ENCODE measurements at regions of chr3 and their contacts with region 1.

Region 1: DNA sequence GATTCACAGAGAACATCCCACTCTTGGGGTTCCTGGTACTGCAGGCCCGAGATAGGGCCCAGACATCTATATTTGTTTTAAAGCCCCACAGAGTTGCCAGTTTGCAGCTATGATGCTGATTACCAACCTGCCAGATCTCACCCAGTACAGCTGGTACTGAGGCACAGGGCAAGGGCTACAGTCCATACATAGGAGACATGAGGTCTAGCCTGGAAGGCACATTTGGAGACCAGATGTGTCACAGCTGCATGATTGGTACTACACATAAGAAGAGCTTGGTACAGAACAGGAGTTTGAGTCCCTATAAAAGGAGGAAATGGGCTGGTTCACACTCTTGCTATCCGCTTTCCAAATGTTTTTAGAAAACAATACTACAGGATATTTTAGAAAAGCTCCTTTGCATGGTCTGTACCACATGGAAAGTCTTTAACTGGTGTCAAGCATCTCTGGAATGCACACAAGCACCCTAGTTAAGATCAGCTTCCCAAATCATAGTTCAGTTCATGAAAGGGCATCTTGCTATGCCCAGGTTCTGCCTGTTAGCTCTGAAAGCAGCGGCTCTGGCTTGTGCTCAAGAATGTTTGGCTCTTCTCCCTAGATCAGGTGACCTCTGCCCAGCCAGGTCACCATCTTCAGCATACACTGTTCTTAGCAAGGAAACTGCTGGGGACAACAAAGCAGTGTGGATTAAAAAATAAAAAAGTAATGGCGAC is 20.6 kb downstream of the MTMR14 start:
- DNase-seq: no peak
- H3K4me3 Mint-ChIP-seq: no peak overlapping the region
- H3K27ac Mint-ChIP-seq: no peak overlapping the region
- H3K4me1 Mint-ChIP-seq: no peaks in the 10 kb centered on the region
- H3K27me3 Mint-ChIP-seq: no peaks in the 10 kb centered on the region
- CTCF ChIP-seq: no peak

Region 2: DNA sequence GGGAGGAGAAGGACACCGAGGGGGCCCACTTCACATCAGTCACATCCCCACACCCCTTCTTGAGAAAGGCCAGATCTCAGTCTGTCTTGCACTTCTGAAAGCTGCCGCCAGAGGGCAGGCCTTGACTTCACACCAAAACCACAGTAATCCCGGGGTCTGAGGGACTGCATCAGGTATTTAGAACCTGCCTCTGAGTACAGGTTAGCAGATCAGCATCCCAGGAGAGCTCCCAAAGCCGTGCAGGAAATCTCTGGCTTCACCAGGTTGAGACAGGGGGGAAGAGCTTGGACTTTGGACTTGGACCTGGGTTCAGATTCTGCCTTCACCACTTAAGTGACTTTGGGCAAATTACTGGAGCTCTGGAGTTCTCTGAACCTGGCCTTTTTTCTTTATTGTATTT is 166.6 kb before region 1 on chr3:
- CTCF ChIA-PET with region 1: no interaction called
- intact Hi-C with region 1: loop called (anchors 10 kb)
- DNase-seq: peak; percentile 77
- H3K4me3 Mint-ChIP-seq: no peak overlapping the region
- H3K27ac Mint-ChIP-seq: no peak overlapping the region
- H3K4me1 Mint-ChIP-seq: peaks cover 7% of the 10 kb centered on the region
- H3K27me3 Mint-ChIP-seq: peaks cover 7% of the 10 kb centered on the region
- CTCF ChIP-seq: peak; percentile 90